Common myeloid progenitor, CD34-positive (primary cell): ENCODE measurements at regions of chr1 and their contacts with region 1.

Region 1: GRCh38 chr1:181142096-181142958 is 53.8 kb downstream of the IER5 start:
- DNase-seq: peak; percentile 84 to 90 (median 88)
- H3K4me3 ChIP-seq: peak overlapping the region in 1 of 7 experiments; percentile 58
- H3K27ac ChIP-seq: no peak overlapping the region
- H3K4me1 ChIP-seq: peaks cover 0 to 41% (median 19%) of the 10 kb centered on the region in 4 experiments
- H3K27me3 ChIP-seq: peaks cover 0 to 3% (median 0%) of the 10 kb centered on the region in 5 experiments

Region 2: DNA sequence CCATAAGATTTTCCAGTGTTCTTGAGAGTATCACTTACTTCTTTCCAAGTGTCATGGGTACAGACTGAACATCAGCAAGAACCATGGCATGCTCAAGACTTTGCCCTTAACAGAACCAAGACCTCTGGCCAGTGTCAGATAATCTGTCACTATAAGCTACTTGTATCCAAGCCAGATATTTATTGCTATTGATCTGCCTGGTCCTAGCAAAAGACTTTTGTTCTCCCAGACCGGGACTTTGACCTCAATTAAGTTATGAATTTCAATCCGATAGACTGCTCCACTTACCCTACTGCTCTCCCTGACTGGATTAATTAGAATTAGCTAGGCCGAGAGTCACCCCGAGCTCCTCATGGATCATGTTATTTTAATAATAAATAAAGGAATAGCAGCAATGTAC is 769.6 kb before region 1 on chr1:
- CTCF ChIA-PET with region 1: no interaction called
- POLR2A ChIA-PET with region 1: no interaction called
- DNase-seq: no peak
- H3K4me3 ChIP-seq: no peak overlapping the region
- H3K27ac ChIP-seq: no peak overlapping the region
- H3K4me1 ChIP-seq: no peaks in the 10 kb centered on the region
- H3K27me3 ChIP-seq: no peaks in the 10 kb centered on the region

Region 3: GRCh38 chr1:180926164-180926981 is 216.0 kb before region 1 on chr1:
- CTCF ChIA-PET with region 1: interaction called, 10 read pairs
- POLR2A ChIA-PET with region 1: no interaction called
- DNase-seq: peak; percentile 75 to 94 (median 89)
- H3K4me3 ChIP-seq: peak overlapping the region in 3 of 7 experiments; percentile 32 to 45 (median 45)
- H3K27ac ChIP-seq: no peak overlapping the region
- H3K4me1 ChIP-seq: peaks cover 0 to 52% (median 40%) of the 10 kb centered on the region in 4 experiments
- H3K27me3 ChIP-seq: no peaks in the 10 kb centered on the region

Region 4: DNA sequence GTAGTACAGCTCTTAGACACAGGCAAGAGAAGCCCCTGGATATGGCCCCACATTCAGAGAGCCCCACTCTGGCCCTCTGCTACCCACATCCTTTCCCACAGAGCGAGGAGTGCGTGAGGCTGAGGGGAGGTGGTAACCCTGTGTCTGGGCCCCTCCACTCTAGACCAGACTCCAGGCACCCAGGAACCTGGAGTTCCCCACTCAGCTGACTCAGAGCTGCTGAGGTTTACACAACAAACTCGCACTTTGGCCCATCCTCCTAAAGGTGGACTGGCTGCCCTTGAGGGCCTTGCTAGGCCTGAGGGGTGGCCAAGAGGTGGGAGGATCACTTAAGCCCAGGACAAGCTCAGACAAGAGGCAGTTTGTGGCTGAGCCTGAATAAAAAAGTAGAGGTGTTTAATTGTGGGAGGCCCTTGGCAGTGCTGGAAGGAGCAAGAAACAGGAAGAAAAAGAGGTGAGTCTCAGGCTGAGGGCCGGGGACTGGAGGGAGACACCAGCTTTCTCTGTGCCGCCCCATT is 97.8 kb before region 1 on chr1:
- CTCF ChIA-PET with region 1: interaction called, 81 read pairs
- POLR2A ChIA-PET with region 1: no interaction called
- DNase-seq: peak in 2 of 3 donors; percentile 29 to 41
- H3K4me3 ChIP-seq: no peak overlapping the region
- H3K27ac ChIP-seq: no peak overlapping the region
- H3K4me1 ChIP-seq: peaks cover 3 to 37% (median 10%) of the 10 kb centered on the region in 4 experiments
- H3K27me3 ChIP-seq: no peaks in the 10 kb centered on the region

Region 5: DNA sequence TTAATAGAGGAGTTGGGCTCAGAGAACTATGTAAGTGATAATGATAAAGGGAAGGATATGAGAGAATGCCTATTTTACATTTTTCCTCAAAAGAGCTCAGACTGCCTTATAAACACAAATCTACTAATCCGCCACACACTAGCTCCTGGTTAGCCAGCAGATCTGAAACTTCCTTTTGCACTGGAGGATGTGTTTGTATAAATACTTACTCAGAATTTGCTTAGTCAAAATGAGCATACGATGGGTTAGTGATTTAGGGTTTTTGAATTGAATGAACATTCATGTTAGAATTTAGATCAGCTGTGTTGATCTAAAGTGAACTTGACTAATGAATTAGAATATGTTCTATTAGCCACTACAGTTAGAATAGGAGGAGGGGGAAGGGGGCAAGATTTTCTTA is 62.9 kb before region 1 on chr1:
- CTCF ChIA-PET with region 1: interaction called, 125 read pairs
- POLR2A ChIA-PET with region 1: no interaction called
- DNase-seq: no peak
- H3K4me3 ChIP-seq: no peak overlapping the region
- H3K27ac ChIP-seq: no peak overlapping the region
- H3K4me1 ChIP-seq: peaks cover 0 to 25% (median 0%) of the 10 kb centered on the region in 4 experiments
- H3K27me3 ChIP-seq: no peaks in the 10 kb centered on the region

Region 6: GRCh38 chr1:181105134-181106021 is 36.9 kb before region 1 on chr1:
- CTCF ChIA-PET with region 1: interaction called, 202 read pairs
- POLR2A ChIA-PET with region 1: no interaction called
- DNase-seq: peak; percentile 83 to 92 (median 92)
- H3K4me3 ChIP-seq: peak overlapping the region; percentile 64 to 88 (median 76)
- H3K27ac ChIP-seq: peak overlapping the region in 1 of 2 experiments; percentile 73
- H3K4me1 ChIP-seq: peaks cover 0 to 58% (median 40%) of the 10 kb centered on the region in 4 experiments
- H3K27me3 ChIP-seq: peaks cover 0 to 2% (median 0%) of the 10 kb centered on the region in 5 experiments

Region 7: DNA sequence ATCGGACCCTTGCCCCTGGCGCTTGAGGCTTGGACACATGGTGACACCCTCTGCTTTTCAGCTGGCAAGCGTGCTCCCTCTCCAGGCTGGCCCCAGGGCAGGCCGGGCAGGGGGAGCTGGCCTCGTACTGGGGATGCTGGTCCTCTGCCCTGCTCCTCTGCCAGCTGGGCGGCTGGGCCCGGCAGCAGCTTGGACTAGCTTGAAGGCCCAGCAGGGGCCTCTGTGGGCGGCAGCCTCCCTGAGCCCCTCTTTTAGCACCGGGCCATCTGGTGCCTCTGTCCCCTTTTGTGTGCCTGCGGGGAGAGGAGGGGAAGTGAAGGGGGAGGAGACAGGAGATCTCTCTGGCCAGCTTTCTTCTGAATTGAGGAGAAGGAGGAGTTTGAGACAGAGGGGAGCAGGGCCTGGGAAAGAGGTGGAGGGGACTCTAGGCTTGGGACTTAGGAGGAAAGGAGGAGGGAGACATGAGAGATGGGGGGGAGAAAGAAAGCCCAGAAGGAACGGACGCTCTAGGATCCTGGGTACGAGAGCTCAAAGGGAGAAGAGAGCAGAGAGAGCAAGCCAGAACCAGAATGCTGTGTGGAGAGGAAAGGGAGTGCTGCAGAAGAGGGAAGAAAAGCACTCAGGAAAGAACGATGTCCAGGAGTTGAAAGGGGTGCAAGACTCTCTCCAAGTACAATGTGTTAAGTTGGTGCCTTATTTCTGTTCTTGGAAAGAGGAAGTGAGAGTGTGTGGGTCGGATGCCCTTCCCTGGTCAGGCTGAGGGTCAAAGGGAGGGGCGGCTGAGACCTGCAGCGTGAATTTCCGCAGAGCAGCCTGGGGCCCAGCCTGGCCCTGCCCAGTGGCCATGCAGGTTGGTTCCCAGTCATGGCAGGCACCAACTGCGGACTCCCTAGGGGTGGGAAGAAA is 13.5 kb before region 1 on chr1:
- CTCF ChIA-PET with region 1: interaction called, 22 read pairs
- POLR2A ChIA-PET with region 1: interaction called, 5 read pairs
- DNase-seq: peak in 2 of 3 donors; percentile 61 to 72
- H3K4me3 ChIP-seq: peak overlapping the region in 5 of 7 experiments; percentile 21 to 48 (median 38)
- H3K27ac ChIP-seq: peak overlapping the region in 1 of 2 experiments; percentile 28
- H3K4me1 ChIP-seq: peaks cover 12 to 82% (median 53%) of the 10 kb centered on the region in 4 experiments
- H3K27me3 ChIP-seq: no peaks in the 10 kb centered on the region

Region 8: DNA sequence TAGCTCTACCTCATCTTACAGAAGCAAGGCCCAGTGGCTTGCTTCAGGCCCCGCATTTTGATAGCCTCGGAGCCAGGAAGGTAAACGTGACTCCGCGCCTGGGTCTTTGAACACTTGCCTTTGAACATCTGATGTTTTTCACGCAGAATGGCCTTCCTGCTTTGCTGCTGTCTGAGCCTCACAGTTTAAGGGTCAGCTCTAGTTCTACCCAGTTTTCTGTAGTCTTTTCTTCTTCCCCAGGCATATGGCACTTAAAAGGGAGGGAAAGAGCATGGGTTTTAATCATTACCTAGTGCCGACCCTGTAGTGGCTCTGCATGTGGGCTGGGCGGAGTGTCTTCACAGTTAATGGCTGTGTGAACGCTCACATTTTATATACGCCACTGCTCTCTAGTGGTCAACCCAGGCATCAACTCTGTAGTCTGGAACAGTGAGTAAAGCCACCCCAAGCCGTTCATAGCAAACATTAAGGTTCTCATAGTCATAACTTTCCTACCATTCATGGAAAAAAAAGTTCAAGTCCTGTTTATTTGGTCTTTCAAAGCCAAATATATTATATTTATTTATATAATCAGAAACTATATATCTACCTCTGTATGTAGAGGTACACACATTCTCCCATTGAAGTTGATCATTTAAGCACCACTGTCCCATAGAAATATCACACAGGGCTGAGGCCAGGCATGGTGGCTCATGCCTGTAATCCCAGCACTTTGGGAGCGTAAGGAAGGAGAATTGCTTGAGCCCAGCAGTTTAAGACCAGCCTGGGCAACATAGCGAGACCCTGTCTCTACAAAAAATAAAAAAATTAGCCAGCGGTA is 24.3 kb after region 1 on chr1:
- CTCF ChIA-PET with region 1: interaction called, 80 read pairs
- POLR2A ChIA-PET with region 1: no interaction called
- DNase-seq: peak; percentile 79 to 90 (median 89)
- H3K4me3 ChIP-seq: no peak overlapping the region
- H3K27ac ChIP-seq: no peak overlapping the region
- H3K4me1 ChIP-seq: peaks cover 0 to 4% (median 0%) of the 10 kb centered on the region in 4 experiments
- H3K27me3 ChIP-seq: peaks cover 0 to 6% (median 0%) of the 10 kb centered on the region in 5 experiments

Region 9: DNA sequence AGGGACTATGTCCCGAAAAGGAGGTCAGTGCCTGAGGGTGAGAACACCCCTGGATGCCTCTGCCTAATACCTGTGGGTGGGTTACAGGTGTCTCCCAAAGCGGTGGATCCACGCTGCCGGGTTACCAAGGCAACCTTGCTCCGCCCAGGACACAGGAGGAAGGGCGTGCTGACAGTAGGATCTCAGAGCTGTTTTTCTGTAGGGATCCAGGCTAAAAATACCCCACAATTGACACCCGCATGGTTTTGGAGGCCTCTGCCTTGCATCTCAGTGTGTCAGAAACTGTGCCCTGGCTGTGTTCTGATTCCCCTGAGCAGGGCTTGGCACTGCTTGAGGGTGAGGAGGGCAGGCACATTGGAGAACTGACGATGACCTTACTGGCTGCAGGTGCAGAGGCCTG is 64.2 kb after region 1 on chr1:
- CTCF ChIA-PET with region 1: no interaction called
- POLR2A ChIA-PET with region 1: no interaction called
- DNase-seq: no peak
- H3K4me3 ChIP-seq: no peak overlapping the region
- H3K27ac ChIP-seq: no peak overlapping the region
- H3K4me1 ChIP-seq: no peaks in the 10 kb centered on the region
- H3K27me3 ChIP-seq: peaks cover 0 to 12% (median 3%) of the 10 kb centered on the region in 5 experiments